ENCODE measurements at regions of chr14 and their contacts with region 1.

Region 1: GRCh38 chr14:22556990-22557623 is 31.9 kb downstream of the DAD1 start:
- DNase-seq: peak; percentile 51 to 97
- H3K4me3 ChIP-seq: peak overlapping the region in 2 of 4 experiments; percentile 30 to 51; a peak in 3 of 8 replicates
- H3K27ac ChIP-seq: peak overlapping the region; percentile 37; the same call in 1 of the 2 replicates
- H3K4me1 ChIP-seq: peaks cover 2 to 10% (median 6%) of the 10 kb centered on the region in 4 experiments; a peak in 6 of 7 replicates
- H3K27me3 ChIP-seq: no peaks in the 10 kb centered on the region
- CTCF ChIP-seq: peak; percentile 72 to 80 (median 78)
- EP300 ChIP-seq: no peak
- POLR2A ChIP-seq: no peak
- RAD21 ChIP-seq: peak; percentile 78 to 80

Region 2: DNA sequence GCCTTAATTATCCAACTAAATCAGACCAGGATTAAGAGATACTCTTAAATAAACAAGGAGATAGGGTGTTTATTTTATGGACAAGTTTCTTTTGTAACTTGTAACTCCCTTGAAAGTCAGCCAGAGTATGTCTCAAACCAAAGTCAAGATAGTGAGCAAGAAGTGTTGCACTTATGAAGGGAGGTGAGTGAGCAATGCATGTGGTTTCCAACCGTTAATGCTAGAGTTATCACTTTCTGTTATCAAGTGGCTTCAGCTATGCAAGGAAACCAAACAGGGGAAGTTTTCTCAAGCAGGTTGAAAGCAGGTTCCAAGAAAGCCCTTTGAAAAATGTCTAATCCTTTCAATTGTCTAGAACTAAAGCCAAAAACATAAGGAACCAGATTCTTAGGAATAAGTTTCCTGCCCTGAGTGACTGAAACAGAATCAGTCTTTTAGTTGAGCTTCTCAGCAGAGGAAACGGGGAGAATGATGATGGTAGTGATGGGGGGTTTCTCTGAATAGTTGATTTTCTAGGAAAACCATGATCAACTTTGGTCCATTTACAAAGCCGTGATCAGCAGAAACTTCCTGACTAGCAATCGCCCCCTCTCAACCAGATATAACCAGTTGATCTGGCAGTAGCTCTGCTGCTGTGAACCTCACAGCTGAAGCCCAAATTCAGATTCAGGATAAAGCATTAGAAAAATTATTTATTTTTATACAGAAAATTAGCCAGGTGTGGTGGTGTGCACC is 96.5 kb before region 1 on chr14:
- CTCF ChIA-PET with region 1: interaction called, 13 read pairs
- POLR2A ChIA-PET with region 1: no interaction called
- DNase-seq: no peak
- H3K4me3 ChIP-seq: no peak overlapping the region
- H3K27ac ChIP-seq: no peak overlapping the region
- H3K4me1 ChIP-seq: no peaks in the 10 kb centered on the region
- H3K27me3 ChIP-seq: no peaks in the 10 kb centered on the region
- CTCF ChIP-seq: no peak
- EP300 ChIP-seq: no peak
- POLR2A ChIP-seq: no peak
- RAD21 ChIP-seq: no peak

Region 3: DNA sequence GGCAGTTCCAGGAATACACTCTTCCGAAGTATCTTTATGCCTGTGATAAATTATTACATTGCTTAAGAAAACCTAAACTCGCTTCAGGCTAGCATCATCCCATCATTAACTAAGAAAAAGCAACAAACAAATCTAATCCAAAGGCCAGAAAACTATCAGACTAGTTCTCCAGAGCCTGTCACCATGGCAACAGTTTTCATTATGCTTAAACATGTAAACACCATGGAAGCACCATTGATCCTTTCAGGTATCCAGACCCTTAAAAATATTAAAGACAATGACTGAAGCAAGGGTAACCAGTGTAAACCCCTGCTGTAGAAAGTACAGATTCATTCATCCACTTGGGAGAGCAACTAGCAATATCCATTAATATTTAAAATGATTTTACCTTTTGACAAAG is 22.1 kb after region 1 on chr14:
- CTCF ChIA-PET with region 1: interaction called, 10 read pairs
- POLR2A ChIA-PET with region 1: no interaction called
- DNase-seq: no peak
- H3K4me3 ChIP-seq: no peak overlapping the region
- H3K27ac ChIP-seq: no peak overlapping the region
- H3K4me1 ChIP-seq: no peaks in the 10 kb centered on the region
- H3K27me3 ChIP-seq: no peaks in the 10 kb centered on the region
- CTCF ChIP-seq: no peak
- EP300 ChIP-seq: no peak
- POLR2A ChIP-seq: no peak
- RAD21 ChIP-seq: no peak

Region 4: DNA sequence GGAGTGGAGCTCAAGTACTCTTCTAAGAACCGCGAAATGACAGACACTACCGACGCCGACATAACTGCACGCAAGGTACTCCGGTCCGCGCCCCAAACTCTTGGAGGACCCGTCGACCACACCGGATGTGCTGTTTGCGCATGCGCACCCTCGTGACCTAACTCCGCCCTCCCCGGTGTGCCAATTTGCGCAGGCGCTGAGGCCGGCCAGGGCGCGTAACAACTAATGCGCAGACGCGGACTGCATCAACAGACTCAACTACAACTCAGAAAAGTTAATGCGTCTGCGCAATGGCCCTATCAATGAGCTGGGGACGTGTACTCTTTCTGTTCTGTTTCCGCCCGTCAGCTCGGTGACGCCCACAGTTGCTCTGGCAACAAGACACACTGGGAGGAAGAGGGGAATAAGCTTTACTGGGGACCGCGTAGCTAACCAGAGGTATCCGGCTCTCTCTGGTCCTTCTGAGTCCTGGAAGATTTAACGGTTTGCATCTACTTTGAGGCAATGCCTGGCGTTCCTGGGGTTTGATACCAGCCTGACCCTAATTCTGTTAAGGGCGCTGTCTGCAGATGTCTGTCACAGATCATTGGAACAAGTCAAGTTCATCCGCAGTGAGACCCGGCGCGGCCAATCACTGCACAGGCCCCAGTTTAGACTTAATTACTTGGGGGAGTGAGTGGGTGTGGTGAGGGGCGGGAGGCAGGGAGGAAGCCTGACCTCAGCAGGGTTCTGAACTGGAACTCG is 32.2 kb after region 1 on chr14 and contains the start of gene DAD1:
- CTCF ChIA-PET with region 1: interaction called, 14 read pairs
- POLR2A ChIA-PET with region 1: interaction called, 3 read pairs
- DNase-seq: peak; percentile 98 to 99
- H3K4me3 ChIP-seq: peak within 1 kb of the TSS; percentile 81 to 99 (median 98)
- H3K27ac ChIP-seq: peak within 1 kb of the TSS; percentile 82
- H3K4me1 ChIP-seq: peaks cover 0 to 3% (median under 1%) of the 10 kb centered on the region in 4 experiments; a peak in 3 of 7 replicates
- H3K27me3 ChIP-seq: no peaks in the 10 kb centered on the region
- CTCF ChIP-seq: no peak
- EP300 ChIP-seq: no peak; a peak in 1 of 3 replicates
- POLR2A ChIP-seq: peak; percentile 9 to 84
- RAD21 ChIP-seq: no peak
- total RNA-seq, gene DAD1: 131 and 133 TPM in 2 replicates

Region 5: DNA sequence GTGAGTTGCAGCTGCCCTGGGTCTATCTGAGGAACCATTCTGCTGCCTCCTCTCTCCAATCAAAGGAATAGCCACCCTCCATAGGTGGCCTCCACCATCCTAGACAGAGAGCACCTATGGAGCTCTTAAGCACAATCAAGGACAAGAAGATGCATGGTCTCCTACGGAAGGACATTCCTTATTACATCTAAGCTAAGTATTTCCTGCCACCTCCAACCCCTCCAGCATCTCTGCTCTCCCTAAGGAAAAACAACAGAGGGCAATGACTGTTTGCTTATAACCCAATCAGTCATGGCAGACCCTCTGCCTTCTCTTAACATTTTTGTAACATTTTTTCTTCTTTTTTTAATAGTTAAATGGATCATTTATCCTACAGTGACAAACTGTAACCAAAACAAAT is 101.8 kb after region 1 on chr14:
- CTCF ChIA-PET with region 1: interaction called, 10 read pairs
- POLR2A ChIA-PET with region 1: no interaction called
- DNase-seq: no peak
- H3K4me3 ChIP-seq: no peak overlapping the region
- H3K27ac ChIP-seq: no peak overlapping the region
- H3K4me1 ChIP-seq: no peaks in the 10 kb centered on the region
- H3K27me3 ChIP-seq: 0 out of 7 replicates have a peak, but pooled peaks cover 0 to 2% (median 0%) of the 10 kb centered on the region in 4 experiments
- CTCF ChIP-seq: no peak
- EP300 ChIP-seq: no peak
- POLR2A ChIP-seq: no peak
- RAD21 ChIP-seq: no peak

Measured in H1 (cell line).